ENCODE measurements at regions of chr16 and their contacts with region 1.

Region 1: GRCh38 chr16:46883690-46884512 is at the start of gene GPT2:
- DNase-seq: peak; percentile 96
- H3K4me3 Mint-ChIP-seq: peak within 1 kb of the TSS; percentile 85
- H3K27ac Mint-ChIP-seq: peak within 1 kb of the TSS; percentile 90
- H3K4me1 Mint-ChIP-seq: peaks cover 14% of the 10 kb centered on the region
- H3K27me3 Mint-ChIP-seq: peaks cover 31% of the 10 kb centered on the region
- total RNA-seq, gene GPT2: 15.7 and 16.0 TPM in 2 replicates

Region 2: DNA sequence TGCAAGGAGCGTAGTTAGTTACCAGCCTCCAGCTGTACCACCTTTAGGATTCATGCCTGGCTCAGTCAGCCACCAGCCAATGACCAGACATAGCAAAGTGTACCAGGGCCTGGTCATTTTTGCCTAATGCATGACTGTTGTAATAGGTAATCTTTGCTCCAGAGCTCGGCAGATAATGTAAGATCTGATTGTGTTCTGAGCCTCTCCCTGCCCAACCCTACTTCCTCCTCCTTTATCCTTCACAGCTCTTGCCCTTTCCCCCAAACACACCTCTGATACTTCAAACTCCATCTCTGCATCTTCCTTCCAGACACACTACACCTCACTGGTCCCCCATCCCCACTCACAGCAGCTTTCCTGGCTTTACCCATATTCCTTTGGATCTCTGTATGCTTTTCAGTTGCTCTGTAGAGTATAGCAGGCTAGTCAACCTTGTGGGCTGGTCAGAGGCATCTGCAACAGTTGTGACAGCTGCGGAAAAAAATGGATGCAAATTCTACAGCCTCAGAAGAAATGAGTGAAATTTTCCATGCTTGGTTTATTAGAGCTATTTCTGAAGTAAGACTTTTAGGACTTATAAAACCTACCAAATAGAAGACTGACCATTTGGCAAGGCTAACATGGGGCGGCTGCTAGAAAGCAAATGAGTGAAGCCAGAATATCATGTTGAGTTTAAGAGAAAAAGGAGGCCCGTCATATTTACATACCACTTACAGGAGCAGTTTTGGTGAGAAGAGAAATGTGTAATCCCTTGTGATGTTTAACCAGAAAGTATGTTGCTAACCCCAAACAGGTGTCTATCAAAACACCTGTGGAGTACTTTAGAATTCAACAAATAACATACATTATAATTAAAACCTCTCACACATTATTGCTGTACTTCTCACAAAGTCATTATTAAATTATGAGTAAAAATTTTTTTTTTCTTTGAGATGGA is 33.0 kb before region 1 on chr16:
- intact Hi-C with region 1: no loop called
- DNase-seq: no peak
- H3K4me3 Mint-ChIP-seq: no peak overlapping the region
- H3K27ac Mint-ChIP-seq: no peak overlapping the region
- H3K4me1 Mint-ChIP-seq: peaks cover 2% of the 10 kb centered on the region
- H3K27me3 Mint-ChIP-seq: peaks cover 3% of the 10 kb centered on the region

Region 3: GRCh38 chr16:46862555-46863447 is 21.1 kb before region 1 on chr16:
- intact Hi-C with region 1: loop called (anchors 2 kb)
- DNase-seq: no peak
- H3K4me3 Mint-ChIP-seq: no peak overlapping the region
- H3K27ac Mint-ChIP-seq: peak overlapping the region; percentile 45
- H3K4me1 Mint-ChIP-seq: peaks cover 37% of the 10 kb centered on the region
- H3K27me3 Mint-ChIP-seq: no peaks in the 10 kb centered on the region